Activated CD8-positive, alpha-beta memory T cell treated with anti-CD3 and anti-CD28 coated beads, Interleukin-2, amount 10 ng/mL, durations not matched to agents 7 days and 5 days (primary cell): ENCODE measurements at regions of chr6 and their contacts with region 1.

Region 1: DNA sequence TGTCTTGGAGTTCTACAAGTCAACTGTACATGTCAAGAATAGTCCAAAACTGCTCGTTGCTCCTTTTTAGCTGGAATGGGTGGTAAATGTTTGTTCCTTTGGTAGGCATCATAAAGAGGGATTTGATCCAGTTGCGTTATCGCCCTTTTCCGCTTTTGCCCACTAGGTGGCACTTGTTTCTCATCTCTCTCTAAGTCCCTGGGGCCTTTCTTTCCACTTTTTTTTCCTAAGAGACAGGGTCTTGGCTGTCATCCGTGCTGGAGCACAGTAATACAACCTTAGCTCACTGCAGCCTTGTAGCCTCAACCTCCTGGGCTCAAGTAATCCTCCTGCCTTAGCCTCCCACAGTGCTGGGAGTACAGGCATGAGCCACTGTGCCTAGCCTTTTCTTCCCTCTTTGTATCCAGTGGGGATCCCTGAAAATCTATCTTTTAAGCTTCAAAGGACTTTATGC is 20.7 kb downstream of the GTPBP2 start:
- DNase-seq: peak; percentile 72
- ATAC-seq: peak; percentile 64
- H3K4me3 Mint-ChIP-seq: no peak overlapping the region
- H3K27ac Mint-ChIP-seq: no peak overlapping the region
- H3K4me1 Mint-ChIP-seq: peaks cover 6% of the 10 kb centered on the region
- H3K27me3 Mint-ChIP-seq: no peaks in the 10 kb centered on the region

Region 2: GRCh38 chr6:43593938-43594337 is 14.4 kb before region 1 on chr6:
- CTCF ChIA-PET with region 1: interaction called, 28 read pairs
- DNase-seq: no peak
- ATAC-seq: no peak
- H3K4me3 Mint-ChIP-seq: no peak overlapping the region
- H3K27ac Mint-ChIP-seq: no peak overlapping the region
- H3K4me1 Mint-ChIP-seq: peaks cover 5% of the 10 kb centered on the region
- H3K27me3 Mint-ChIP-seq: no peaks in the 10 kb centered on the region

Region 3: DNA sequence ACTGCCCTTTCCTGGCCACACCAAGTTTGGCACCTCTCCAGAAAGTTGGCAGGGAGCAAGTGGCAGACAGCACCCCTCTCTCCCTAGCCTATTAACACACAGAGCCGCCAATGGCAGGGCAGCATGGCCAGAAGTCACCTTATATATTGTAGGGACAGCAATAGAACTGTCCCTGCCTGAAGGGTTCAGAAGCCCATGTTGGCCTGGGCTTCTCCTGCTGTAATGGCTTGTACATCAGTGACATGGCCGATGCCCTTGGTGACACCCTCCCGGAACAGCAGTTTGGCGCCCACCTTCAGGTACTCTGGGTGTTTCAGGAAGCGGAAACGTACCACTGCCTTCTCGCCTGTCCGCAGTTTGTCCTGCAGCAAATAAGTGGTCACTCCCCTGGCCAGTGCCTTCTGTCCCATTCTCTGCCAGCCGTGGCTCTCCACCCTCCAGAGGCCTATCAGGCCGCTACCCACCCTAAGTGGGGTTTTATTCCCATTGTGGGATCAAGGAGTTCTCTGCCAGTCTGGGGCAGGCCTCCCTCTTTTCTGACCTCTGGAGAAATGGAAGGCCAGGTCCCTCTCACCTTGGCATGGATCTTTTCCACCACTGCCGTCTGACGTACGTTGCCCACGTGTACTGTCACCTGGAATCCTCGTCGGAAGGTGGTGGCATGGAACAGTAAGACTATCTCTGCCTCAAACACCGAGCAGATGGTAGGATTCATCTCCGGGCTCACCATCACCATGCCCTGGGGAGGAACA is 13.3 kb after region 1 on chr6:
- CTCF ChIA-PET with region 1: interaction called, 16 read pairs
- DNase-seq: no peak
- ATAC-seq: no peak
- H3K4me3 Mint-ChIP-seq: no peak overlapping the region
- H3K27ac Mint-ChIP-seq: no peak overlapping the region
- H3K4me1 Mint-ChIP-seq: peaks cover 10% of the 10 kb centered on the region
- H3K27me3 Mint-ChIP-seq: no peaks in the 10 kb centered on the region

Region 4: GRCh38 chr6:44058617-44059358 is 450.5 kb after region 1 on chr6:
- CTCF ChIA-PET with region 1: no interaction called
- DNase-seq: peak; percentile 57
- ATAC-seq: peak; percentile 63
- H3K4me3 Mint-ChIP-seq: no peak overlapping the region
- H3K27ac Mint-ChIP-seq: no peak overlapping the region
- H3K4me1 Mint-ChIP-seq: peaks cover 14% of the 10 kb centered on the region
- H3K27me3 Mint-ChIP-seq: peaks cover 2% of the 10 kb centered on the region